Activated CD8-positive, alpha-beta T cell treated with anti-CD3 and anti-CD28 coated beads for 36 hours (primary cell): ENCODE measurements at regions of chr12 and their contacts with region 1.

Region 1: GRCh38 chr12:111046896-111047295 is 126.5 kb upstream of the MYL2 start:
- DNase-seq: no peak
- ATAC-seq: no peak
- H3K4me3 Mint-ChIP-seq: no peak overlapping the region
- H3K27ac Mint-ChIP-seq: no peak overlapping the region
- H3K4me1 Mint-ChIP-seq: no peaks in the 10 kb centered on the region
- H3K27me3 Mint-ChIP-seq: no peaks in the 10 kb centered on the region
- CTCF ChIP-seq: no peak

Region 2: GRCh38 chr12:110972866-110973265 is 74.0 kb before region 1 on chr12:
- CTCF ChIA-PET with region 1: no interaction called
- POLR2A ChIA-PET with region 1: no interaction called
- intact Hi-C with region 1: loop called (anchors 2 kb)
- DNase-seq: no peak
- ATAC-seq: no peak
- H3K4me3 Mint-ChIP-seq: no peak overlapping the region
- H3K27ac Mint-ChIP-seq: no peak overlapping the region
- H3K4me1 Mint-ChIP-seq: peaks cover 6% of the 10 kb centered on the region
- H3K27me3 Mint-ChIP-seq: peaks cover 3% of the 10 kb centered on the region
- CTCF ChIP-seq: no peak